ENCODE measurements at regions of chr3 and their contacts with region 1.

Region 1: GRCh38 chr3:194315088-194315964 is 35.8 kb downstream of the CPN2 start:
- DNase-seq: no peak
- H3K4me3 ChIP-seq: peak overlapping the region; percentile 44
- H3K27me3 ChIP-seq: peaks cover 42% of the 10 kb centered on the region
- CTCF ChIP-seq: peak; percentile 85

Region 2: GRCh38 chr3:193665370-193665989 is 649.8 kb before region 1 on chr3:
- CTCF ChIA-PET with region 1: interaction called, 53 read pairs
- POLR2A ChIA-PET with region 1: no interaction called
- DNase-seq: peak; percentile 11
- H3K4me3 ChIP-seq: no peak overlapping the region
- H3K27me3 ChIP-seq: no peaks in the 10 kb centered on the region
- CTCF ChIP-seq: peak; percentile 42

Region 3: GRCh38 chr3:193768070-193768394 is 547.3 kb before region 1 on chr3:
- CTCF ChIA-PET with region 1: interaction called, 10 read pairs
- POLR2A ChIA-PET with region 1: no interaction called
- DNase-seq: no peak
- H3K4me3 ChIP-seq: no peak overlapping the region
- H3K27me3 ChIP-seq: no peaks in the 10 kb centered on the region; the same call in none of the 2 replicates
- CTCF ChIP-seq: no peak

Region 4: GRCh38 chr3:193780810-193781472 is 534.4 kb before region 1 on chr3:
- CTCF ChIA-PET with region 1: interaction called, 241 read pairs
- POLR2A ChIA-PET with region 1: no interaction called
- DNase-seq: no peak
- H3K4me3 ChIP-seq: no peak overlapping the region
- H3K27me3 ChIP-seq: peaks cover 22% of the 10 kb centered on the region
- CTCF ChIP-seq: peak; percentile 92

Region 5: DNA sequence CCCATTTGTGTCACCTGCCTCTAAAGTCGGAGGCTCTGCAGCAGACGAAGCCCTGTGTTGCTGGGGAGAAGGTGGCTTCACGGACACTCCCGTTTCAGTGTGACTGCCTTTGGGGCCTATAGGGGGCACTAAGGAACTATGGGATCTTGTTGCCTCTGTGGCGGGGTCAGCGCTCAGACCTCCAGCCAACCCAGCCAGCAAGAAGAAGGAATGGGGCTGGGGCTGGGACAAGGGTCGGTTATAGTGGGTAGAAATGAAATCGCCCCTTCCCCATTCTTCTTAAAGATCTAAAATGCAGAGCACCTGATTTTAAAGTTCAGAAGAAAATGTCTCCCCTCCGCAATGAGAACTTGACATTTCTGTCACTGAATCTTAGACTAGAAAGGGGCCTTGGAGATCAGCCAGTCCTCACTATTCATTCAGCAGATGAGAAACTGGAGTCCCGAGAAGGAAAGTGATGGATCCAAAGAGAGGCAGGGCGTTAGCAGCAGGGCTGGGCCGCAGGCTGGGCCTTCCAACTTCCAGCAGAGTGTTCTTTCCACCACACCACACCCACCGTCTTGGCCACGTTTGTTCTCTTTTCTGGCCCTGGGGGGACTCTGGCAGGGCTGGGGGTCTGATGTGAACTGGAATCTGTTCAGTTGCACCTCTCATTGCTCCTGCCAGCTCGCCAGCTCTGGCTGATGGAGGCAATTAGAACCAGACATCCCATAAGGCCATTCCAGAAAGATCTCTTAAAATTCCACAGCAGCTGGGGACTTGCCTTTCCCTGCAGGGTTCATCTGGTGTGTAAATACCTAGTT is 526.9 kb before region 1 on chr3:
- CTCF ChIA-PET with region 1: interaction called, 241 read pairs
- POLR2A ChIA-PET with region 1: no interaction called
- DNase-seq: no peak
- H3K4me3 ChIP-seq: no peak overlapping the region
- H3K27me3 ChIP-seq: peaks cover 9% of the 10 kb centered on the region
- CTCF ChIP-seq: peak; percentile 75

Region 6: DNA sequence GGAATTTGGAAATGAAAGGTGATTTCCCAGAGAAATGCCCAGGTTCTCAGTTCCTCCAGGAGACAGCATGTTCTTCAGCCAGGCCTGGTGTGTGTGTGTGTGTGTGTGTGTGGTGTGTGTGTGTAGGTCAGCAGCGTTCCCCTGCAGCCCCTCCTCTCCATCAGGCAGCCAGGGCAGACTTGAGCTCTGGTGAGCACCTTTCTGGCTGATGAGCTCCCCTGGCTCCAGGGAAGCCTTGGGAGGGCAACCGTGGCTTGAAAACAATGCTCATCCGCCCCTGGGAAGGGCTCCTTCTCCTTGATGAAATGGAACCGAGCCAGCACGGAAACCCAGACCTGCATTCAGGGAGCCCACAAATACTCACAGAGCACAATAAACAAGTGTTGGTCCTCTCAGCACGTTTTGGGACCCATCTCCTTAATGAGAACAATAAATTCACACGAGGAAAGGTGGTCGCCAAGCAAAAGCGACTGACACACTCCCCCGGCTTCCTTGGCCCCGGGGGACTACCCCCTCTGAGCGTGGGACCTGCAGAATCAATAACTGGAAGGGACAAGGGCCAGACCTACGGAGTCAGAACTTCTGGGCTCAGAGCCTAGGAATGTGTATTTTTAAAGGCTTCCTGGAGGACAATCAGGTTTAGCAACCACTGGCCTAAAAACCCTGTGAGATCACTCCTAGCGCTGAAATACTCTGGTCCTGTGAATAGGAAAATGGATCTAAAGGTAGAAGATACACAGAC is 218.0 kb before region 1 on chr3:
- CTCF ChIA-PET with region 1: no interaction called
- POLR2A ChIA-PET with region 1: no interaction called
- DNase-seq: no peak
- H3K4me3 ChIP-seq: no peak overlapping the region
- H3K27me3 ChIP-seq: peaks cover 32% of the 10 kb centered on the region
- CTCF ChIP-seq: no peak

Region 7: DNA sequence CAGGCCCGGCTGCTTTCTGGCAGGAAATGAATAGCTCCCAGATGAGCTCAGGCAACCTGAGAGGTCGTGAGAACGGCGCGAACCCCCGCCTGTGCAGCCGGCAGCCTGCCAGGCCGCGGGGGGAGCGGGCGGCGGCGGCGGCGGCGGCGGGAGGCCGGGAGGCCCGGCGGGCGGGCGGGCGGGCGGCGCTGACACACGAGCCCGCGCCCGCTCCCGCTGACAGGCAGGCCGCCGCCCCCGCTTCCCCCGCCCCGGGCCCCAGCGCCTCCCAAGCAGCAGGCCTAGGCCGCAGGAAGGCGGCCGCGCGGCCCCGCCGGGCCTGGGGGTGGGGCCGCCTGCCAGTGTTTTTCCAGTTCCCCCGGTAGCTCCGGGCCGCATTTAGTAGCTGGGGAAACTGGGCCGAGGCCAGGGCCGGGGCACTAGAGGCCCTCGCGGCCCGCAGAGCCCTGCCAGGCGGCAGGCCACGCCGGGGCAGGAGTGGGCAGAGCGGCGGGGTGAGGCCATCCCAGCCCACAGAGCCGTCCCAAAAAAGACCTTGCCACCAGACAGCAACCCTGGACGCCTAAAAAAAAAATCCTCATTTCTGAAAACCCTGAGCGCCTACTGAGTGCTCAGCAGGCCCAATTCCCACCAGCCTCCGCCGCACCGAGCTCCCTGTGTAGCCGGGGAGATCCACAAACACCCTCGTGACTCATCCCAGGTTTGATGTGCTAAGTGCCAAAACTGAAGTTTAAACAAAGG is 173.7 kb before region 1 on chr3:
- CTCF ChIA-PET with region 1: interaction called, 38 read pairs
- POLR2A ChIA-PET with region 1: no interaction called
- DNase-seq: no peak
- H3K4me3 ChIP-seq: peak overlapping the region; percentile 37
- H3K27me3 ChIP-seq: no peaks in the 10 kb centered on the region
- CTCF ChIP-seq: no peak

Region 8: DNA sequence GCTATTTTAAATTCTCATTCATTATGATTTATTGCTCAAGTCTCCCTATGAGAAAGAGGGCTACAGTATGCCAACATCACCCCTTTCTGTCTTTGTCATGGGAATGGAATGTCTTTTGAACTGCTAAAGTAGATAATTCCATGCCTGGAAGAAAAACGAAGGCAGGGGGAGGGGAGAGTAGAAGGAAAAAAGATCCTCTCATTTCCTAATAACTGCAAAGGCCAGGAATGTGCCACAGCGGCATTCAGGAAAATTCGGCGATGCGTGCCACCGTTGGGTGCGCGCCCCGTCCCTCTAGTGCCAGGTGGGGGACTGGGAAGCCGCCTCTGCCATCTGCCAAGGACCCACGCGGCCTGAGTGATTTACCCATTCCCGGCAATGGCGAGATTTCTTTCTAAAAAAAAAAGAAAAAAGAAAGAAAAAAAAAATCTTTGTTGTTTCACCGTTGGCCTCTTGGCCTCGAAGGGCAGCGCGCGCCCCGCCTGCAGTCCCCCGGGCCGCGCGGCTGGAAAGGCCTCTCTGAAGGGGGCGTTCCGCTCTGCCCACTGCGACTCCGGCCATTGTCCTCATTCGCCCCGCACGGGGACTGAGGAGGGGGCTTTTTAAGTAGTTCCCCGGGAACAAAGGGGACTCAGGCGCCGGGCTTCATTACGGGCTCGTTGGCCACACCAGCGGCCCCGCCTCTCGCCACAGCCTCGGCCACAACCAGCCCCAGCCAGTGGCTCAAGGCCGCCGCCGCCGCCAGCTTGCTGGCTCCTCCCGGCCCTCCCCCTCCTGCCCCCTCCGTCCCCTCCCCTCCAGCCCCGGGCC is 18.7 kb before region 1 on chr3:
- CTCF ChIA-PET with region 1: interaction called, 13 read pairs
- POLR2A ChIA-PET with region 1: no interaction called
- DNase-seq: no peak
- H3K4me3 ChIP-seq: no peak overlapping the region; the same call in 1 of the 2 replicates
- H3K27me3 ChIP-seq: peaks cover 3% of the 10 kb centered on the region
- CTCF ChIP-seq: 0 out of 2 replicates have a peak, but pooled peaks have one; percentile 1

Region 9: GRCh38 chr3:194407420-194407819 is 92.1 kb after region 1 on chr3:
- CTCF ChIA-PET with region 1: no interaction called
- POLR2A ChIA-PET with region 1: no interaction called
- DNase-seq: no peak
- H3K4me3 ChIP-seq: no peak overlapping the region
- H3K27me3 ChIP-seq: no peaks in the 10 kb centered on the region
- CTCF ChIP-seq: no peak

Region 10: GRCh38 chr3:194761384-194761783 is 446.1 kb after region 1 on chr3:
- CTCF ChIA-PET with region 1: no interaction called
- POLR2A ChIA-PET with region 1: no interaction called
- DNase-seq: no peak
- H3K4me3 ChIP-seq: no peak overlapping the region
- H3K27me3 ChIP-seq: peaks cover 12% of the 10 kb centered on the region; the same call in 1 of the 2 replicates
- CTCF ChIP-seq: no peak

Region 11: DNA sequence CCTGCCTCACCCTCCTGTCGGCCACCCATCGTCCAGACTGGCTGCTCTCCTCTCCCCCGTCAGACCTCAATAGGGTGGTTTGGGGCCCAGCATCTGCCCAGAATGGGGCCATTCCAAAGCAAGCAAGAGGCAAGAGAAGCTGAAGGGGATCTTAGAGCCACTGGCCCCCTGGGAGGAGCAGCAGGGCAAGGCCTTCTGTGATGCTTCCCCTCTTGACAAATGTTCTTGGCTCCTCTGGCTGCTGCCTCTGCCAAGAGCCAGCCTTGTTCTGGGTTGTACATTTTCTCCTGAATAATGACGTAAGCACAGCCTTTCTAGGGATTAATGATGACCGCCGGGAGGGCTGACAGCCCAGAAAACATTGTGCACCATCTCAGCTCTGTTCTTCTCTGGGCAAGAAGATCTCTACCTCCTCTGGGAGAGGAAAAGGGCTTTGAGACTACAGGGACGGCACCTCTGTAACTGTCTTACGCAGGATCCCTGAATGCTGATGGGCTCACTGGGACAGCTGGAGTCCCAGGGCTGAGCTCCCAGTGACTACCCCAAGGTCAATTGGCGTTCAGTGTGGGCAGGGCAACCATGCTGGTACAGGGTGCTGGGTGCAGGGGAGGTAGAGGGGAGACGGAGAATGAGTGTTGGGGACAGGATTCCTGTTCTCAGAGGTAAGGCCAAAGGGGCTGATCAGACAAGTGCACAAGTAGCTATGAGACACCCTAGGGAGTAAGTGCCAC is 623.6 kb after region 1 on chr3:
- CTCF ChIA-PET with region 1: no interaction called
- POLR2A ChIA-PET with region 1: no interaction called
- DNase-seq: no peak
- H3K4me3 ChIP-seq: no peak overlapping the region
- H3K27me3 ChIP-seq: peaks cover 2% of the 10 kb centered on the region
- CTCF ChIP-seq: no peak